Transverse colon (tissue), 4 donors: ENCODE measurements at regions of chr19 and their contacts with region 1.

Region 1: DNA sequence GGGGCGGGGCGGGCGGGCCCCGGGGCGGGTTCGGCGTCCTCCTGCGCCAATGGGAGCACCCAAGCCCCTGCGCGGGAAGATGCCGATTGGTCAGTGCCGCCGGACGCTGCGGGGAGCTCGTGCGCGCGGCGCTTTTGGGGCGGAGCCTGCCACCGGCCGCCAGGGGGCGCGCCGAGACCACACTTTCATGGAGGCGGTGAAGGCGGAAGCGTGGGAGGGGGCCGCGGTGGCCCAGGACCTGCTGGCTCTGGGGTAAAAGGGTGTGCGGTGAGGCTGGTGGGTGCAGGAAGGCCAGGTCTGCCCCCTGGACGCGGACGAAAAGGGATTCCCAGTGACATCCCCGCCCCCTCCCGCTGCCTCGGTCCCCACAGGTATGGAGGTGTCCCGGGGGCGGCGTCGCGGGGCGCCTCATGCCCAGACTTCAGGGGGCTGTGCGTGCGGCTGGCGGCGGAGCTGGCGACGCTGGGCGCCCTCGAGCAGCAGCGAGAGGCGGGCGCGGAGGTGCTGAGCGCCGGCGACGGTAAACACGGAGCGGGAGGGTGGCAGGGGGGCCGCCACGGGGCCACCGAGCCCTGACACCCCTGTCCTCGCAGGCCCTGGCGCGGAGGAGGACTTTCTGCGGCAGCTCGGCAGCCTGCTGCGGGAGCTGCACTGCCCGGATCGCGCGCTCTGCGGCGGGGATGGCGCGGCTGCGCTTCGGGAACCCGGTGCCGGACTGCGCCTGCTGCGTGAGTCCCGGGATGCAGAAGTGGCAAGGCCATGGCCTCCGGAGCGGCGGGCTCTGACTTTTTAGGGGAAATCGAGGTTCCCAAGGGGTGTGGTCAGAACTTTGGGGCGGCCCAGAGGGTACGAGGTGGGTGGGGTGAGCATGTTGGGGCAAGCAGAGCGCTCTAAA is at the start of gene FAM98C:
- DNase-seq: peak; percentile 98
- H3K4me3 ChIP-seq: peak within 1 kb of the TSS; percentile 49 to 95 (median 90)
- H3K27ac ChIP-seq: peak within 1 kb of the TSS; percentile 84 to 95 (median 90)
- H3K4me1 ChIP-seq: peaks cover 0 to 20% (median 7%) of the 10 kb centered on the region in 4 donors
- H3K27me3 ChIP-seq: peaks cover 35% of the 10 kb centered on the region
- CTCF ChIP-seq: peak; percentile 91 to 100 (median 96)
- EP300 ChIP-seq: no peak
- POLR2A ChIP-seq: peak; percentile 63
- total RNA-seq, gene FAM98C: 34.0 to 102 (median 41.2) TPM

Region 2: DNA sequence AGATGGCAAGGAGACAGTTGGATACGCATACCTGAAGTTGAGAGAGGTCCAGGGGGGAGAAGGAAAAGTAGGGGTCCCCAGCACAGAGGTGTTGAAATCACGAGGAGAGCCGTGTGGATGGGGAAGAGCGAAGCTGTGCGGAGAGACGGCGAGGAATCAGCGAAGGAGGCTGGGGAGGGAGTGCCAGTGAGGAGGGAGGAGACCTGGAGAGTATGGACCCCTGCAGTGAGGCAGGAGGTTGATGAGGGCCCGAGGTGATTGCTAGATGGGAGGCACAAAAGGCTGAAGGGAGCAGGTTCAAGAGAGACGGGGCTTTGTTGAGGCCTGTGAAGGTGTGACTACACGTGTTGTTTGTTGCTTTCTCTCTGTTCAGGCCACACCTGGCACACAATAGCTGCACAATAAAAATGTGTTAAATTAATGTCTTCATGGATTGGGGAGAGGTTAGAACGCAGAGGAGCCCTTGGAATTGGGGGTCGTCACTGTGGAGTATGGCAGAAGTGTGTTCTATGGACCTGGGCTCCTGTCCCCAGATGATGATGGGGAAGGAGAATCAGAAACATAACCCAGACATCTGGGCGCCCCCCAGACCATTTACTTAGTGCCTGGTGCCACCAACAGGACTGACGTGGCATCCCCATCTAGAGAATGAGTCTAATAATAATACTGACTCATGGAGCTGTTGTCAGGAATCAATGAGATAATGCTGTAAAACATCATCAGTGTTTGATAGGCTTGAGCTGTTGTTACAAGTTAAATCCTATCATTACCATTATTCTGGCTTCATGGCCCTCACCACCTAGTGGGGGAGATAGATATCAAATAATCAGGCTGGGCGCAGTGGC is 358.7 kb before region 1 on chr19:
- in situ Hi-C with region 1: no loop called
- intact Hi-C with region 1: no loop called
- DNase-seq: no peak
- H3K4me3 ChIP-seq: no peak overlapping the region
- H3K27ac ChIP-seq: no peak overlapping the region
- H3K4me1 ChIP-seq: peaks cover 0 to 8% (median 3%) of the 10 kb centered on the region in 4 donors
- H3K27me3 ChIP-seq: no peaks in the 10 kb centered on the region
- CTCF ChIP-seq: no peak
- EP300 ChIP-seq: no peak
- POLR2A ChIP-seq: no peak

Region 3: GRCh38 chr19:38335949-38336637 is 67.1 kb before region 1 on chr19:
- in situ Hi-C with region 1: no loop called
- intact Hi-C with region 1: no loop called
- DNase-seq: peak; percentile 98
- H3K4me3 ChIP-seq: peak overlapping the region; percentile 63 to 92 (median 84)
- H3K27ac ChIP-seq: peak overlapping the region; percentile 98 to 100 (median 99)
- H3K4me1 ChIP-seq: peaks cover 5 to 22% (median 7%) of the 10 kb centered on the region in 4 donors
- H3K27me3 ChIP-seq: no peaks in the 10 kb centered on the region
- CTCF ChIP-seq: no peak
- EP300 ChIP-seq: no peak
- POLR2A ChIP-seq: peak; percentile 91

Region 4: DNA sequence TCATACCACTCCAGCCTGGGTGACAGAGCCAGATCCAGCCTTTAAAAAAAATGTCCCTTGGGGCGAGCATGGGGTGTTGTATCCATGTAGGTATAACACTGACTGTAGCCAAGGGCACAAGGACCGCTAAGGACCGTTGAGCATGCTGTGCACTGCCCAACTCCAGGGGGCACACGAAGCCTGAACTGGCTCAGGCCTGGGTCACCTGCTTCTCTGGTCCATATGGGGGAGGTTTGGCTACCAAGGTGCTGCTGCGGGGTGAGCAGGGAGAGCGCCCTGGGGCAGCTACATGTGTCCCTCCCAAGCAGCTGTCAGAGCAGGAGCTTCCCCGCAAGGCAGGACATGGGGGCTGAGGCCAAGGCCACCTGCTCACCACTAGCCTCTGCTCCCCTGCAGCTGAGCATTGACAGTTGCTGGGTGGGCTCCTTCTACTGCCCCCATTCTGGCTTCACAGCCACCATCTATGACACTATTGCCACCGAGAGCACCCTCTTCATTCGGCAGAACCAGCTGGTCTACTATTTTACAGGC is 51.3 kb before region 1 on chr19:
- in situ Hi-C with region 1: no loop called
- intact Hi-C with region 1: no loop called
- DNase-seq: no peak
- H3K4me3 ChIP-seq: no peak overlapping the region
- H3K27ac ChIP-seq: no peak overlapping the region
- H3K4me1 ChIP-seq: no peaks in the 10 kb centered on the region
- H3K27me3 ChIP-seq: peaks cover 21% of the 10 kb centered on the region
- CTCF ChIP-seq: no peak
- EP300 ChIP-seq: no peak
- POLR2A ChIP-seq: peak; percentile 8

Region 5: DNA sequence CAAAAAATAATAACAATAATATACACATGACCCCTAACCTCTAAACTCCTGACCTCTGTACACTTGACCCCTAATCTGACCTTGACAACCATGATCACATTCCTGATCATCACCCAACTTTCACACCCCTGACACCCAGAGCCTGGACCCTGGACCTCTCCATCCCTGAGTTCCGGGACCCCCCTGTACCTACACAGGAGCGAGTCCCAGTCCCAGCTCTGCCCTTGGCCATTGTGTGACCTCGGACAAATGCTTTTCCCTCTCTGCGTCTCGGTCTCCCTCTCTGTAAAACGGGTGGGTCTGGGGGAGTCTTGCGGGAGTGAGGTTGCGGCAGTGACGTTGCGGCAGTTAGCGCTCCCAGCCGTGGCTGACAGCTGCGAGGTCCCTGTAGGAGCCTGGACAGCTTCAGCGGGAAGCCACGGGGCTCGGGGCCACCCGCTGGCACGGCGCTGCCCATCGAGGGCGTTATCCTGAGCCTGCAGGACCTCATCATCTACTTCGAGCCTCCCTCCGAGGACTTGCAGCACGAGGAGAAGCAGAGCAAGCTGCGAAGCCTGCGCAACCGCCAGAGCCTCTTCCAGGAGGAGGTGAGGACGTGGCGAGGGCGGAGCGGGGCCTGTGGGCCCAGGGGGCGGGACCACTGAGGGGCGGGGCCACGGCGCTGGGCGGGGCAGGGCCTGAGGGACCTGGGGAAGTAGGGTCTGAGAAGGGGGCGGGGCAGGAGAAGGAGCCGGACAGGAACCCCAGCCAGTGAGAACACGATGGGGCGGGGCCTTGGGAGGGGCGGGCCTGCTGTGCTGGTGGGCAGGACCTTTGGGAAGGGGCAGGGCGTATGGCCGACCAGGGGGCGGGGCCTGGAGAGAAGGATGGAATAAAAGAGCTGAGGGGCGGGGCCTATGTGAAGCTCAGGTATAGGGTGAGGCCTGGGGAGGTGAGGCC is 49.5 kb after region 1 on chr19:
- in situ Hi-C with region 1: no loop called
- intact Hi-C with region 1: no loop called
- DNase-seq: no peak
- H3K4me3 ChIP-seq: no peak overlapping the region
- H3K27ac ChIP-seq: no peak overlapping the region
- H3K4me1 ChIP-seq: no peaks in the 10 kb centered on the region
- H3K27me3 ChIP-seq: no peaks in the 10 kb centered on the region
- CTCF ChIP-seq: no peak
- EP300 ChIP-seq: no peak
- POLR2A ChIP-seq: no peak

Region 6: GRCh38 chr19:38618590-38619360 is 215.6 kb after region 1 on chr19 and contains the start of gene EIF3K:
- in situ Hi-C with region 1: loop called in 2 of 4 experiments (anchors 10 to 25 kb)
- intact Hi-C with region 1: no loop called
- DNase-seq: peak; percentile 99
- H3K4me3 ChIP-seq: peak within 1 kb of the TSS; percentile 76 to 95 (median 84)
- H3K27ac ChIP-seq: peak within 1 kb of the TSS; percentile 89 to 95 (median 92)
- H3K4me1 ChIP-seq: peaks cover 11 to 20% (median 16%) of the 10 kb centered on the region in 4 donors
- H3K27me3 ChIP-seq: no peaks in the 10 kb centered on the region
- CTCF ChIP-seq: no peak
- EP300 ChIP-seq: no peak
- POLR2A ChIP-seq: peak; percentile 86
- total RNA-seq, gene EIF3K: 267 to 660 (median 460) TPM

Region 7: GRCh38 chr19:38634757-38635482 is 231.7 kb after region 1 on chr19:
- in situ Hi-C with region 1: no loop called
- intact Hi-C with region 1: loop called (anchors 10 kb)
- DNase-seq: peak; percentile 86
- H3K4me3 ChIP-seq: no peak overlapping the region
- H3K27ac ChIP-seq: peak overlapping the region; percentile 24 to 82 (median 74)
- H3K4me1 ChIP-seq: peaks cover 7 to 34% (median 22%) of the 10 kb centered on the region in 4 donors
- H3K27me3 ChIP-seq: no peaks in the 10 kb centered on the region
- CTCF ChIP-seq: peak; percentile 95 to 97 (median 96)
- EP300 ChIP-seq: no peak
- POLR2A ChIP-seq: no peak

Region 8: DNA sequence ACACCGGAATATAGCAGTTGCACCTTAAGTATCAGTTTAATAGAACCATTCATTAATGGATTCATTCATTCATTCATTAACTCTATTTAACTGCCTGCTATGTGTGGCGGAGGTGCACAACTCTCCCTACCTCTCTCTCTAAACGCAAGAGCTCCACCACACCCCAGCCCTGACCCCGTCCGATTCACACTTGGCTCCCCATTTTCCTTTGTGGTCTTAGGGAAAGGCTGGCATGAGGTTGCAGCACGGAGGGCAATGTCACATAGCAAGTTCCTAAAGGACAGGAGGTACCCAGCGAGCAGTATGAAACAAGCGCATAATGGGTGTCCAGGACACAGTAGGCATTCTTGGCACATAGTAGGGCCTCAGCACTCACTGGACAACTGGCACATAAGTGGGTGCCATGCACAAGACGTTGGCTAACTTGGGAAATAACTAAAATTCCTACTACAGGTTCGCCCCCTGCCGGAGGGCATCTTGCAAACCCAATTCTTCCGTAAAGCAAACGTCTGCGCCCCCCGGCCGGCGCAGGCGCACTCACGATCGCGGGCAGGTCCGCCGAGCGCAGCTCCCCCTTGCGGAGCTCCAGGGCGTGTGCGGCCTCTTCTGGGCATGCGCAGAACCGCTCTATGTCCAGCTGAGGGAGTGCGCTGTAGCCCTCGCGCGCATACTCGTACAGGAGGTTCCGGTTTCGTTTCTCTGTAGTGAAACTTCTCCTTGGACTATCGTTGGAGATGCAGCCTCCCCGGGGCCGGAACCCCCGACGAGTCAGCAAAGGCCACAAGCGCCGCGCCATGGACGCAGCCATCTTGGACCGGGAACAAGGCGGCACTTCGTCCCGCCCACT is 526.9 kb after region 1 on chr19 and contains the start of gene SARS2:
- in situ Hi-C with region 1: loop called in 2 of 4 experiments (anchors 25 kb)
- intact Hi-C with region 1: no loop called
- DNase-seq: peak; percentile 93
- H3K4me3 ChIP-seq: peak within 1 kb of the TSS; percentile 55 to 83 (median 70)
- H3K27ac ChIP-seq: peak within 1 kb of the TSS; percentile 88 to 93 (median 90)
- H3K4me1 ChIP-seq: peaks cover 7 to 19% (median 13%) of the 10 kb centered on the region in 4 donors
- H3K27me3 ChIP-seq: no peaks in the 10 kb centered on the region
- CTCF ChIP-seq: peak; percentile 97 to 99 (median 99)
- EP300 ChIP-seq: no peak
- POLR2A ChIP-seq: no peak
- total RNA-seq, gene SARS2: 21.4 to 186 (median 42.7) TPM

Region 9: DNA sequence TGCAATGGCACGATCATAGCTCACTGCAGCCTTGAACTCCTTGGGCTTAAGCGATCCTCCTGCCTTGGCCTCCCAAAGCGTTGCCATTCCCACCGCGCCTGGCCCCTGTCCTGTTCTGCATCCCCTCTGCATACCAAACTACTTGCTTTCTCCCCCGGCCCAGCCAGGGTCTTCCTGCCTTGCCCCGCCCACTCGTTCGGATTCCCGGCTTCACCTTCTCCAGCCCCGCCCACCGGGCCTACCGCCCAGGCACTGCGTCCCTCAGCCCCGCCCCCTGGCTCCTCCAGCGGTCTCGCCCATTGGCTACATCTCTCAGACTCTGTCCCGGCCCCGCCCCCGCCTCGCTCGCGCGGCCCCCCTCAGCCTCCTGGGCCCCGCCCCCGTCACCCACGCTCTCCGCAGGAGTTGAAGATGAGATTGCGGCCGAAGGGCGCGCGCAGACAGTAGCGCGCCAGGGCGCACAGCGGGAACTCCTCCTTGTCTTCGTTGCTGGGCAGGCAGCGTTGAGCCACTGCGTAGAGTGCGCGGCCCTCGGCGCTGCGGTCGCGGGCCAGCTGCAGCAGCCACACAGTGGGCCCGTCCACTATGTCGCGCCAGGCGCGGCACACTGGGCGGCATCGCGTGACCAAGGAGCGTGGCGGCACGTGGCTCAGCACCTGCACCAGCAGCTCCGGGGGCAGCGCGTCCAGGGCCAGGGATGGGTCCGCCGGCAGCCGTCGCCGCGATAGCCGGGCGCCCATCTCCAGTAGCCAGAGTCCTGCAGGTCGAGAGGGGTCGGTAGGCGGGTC is 546.6 kb after region 1 on chr19:
- in situ Hi-C with region 1: loop called in 3 of 4 experiments (anchors 25 kb)
- intact Hi-C with region 1: no loop called
- DNase-seq: peak; percentile 76
- H3K4me3 ChIP-seq: peak overlapping the region in 2 of 4 donors; percentile 22 to 36
- H3K27ac ChIP-seq: no peak overlapping the region
- H3K4me1 ChIP-seq: peaks cover 4 to 10% (median 8%) of the 10 kb centered on the region in 4 donors
- H3K27me3 ChIP-seq: peaks cover 6% of the 10 kb centered on the region
- CTCF ChIP-seq: no peak
- EP300 ChIP-seq: no peak
- POLR2A ChIP-seq: no peak